ENCODE measurements at regions of chr6 and their contacts with region 1.

Region 1: GRCh38 chr6:100446115-100447080 is 18.3 kb downstream of the SIM1 start:
- DNase-seq: no peak
- ATAC-seq: no peak
- H3K4me3 ChIP-seq: no peak overlapping the region
- H3K4me3 Mint-ChIP-seq: peak overlapping the region in 3 of 10 donors; percentile 9 to 35 (median 28)
- H3K27ac ChIP-seq: no peak overlapping the region
- H3K27ac Mint-ChIP-seq: peak overlapping the region in 1 of 9 donors; percentile 73
- H3K4me1 ChIP-seq: no peaks in the 10 kb centered on the region
- H3K4me1 Mint-ChIP-seq: peaks cover 0 to 11% (median 3%) of the 10 kb centered on the region in 7 donors
- H3K27me3 ChIP-seq: peaks cover 0 to 8% of the 10 kb centered on the region in 2 donors
- H3K27me3 Mint-ChIP-seq: peaks cover 39 to 67% (median 55%) of the 10 kb centered on the region in 5 donors

Region 2: GRCh38 chr6:99603421-99604165 is 842.8 kb before region 1 on chr6:
- CTCF ChIA-PET with region 1: no interaction called
- POLR2A ChIA-PET with region 1: no interaction called
- intact Hi-C with region 1: loop called in 1 of 2 experiments (anchors 5 kb)
- DNase-seq: peak in 1 of 9 donors; percentile 48
- ATAC-seq: peak; percentile 35
- H3K4me3 ChIP-seq: peak overlapping the region; percentile 40
- H3K4me3 Mint-ChIP-seq: peak overlapping the region; percentile 35 to 75 (median 70)
- H3K27ac ChIP-seq: no peak overlapping the region
- H3K27ac Mint-ChIP-seq: no peak overlapping the region
- H3K4me1 ChIP-seq: peaks cover 18 to 28% of the 10 kb centered on the region in 2 donors
- H3K4me1 Mint-ChIP-seq: peaks cover 18 to 44% (median 27%) of the 10 kb centered on the region in 7 donors
- H3K27me3 ChIP-seq: peaks cover 45 to 47% of the 10 kb centered on the region in 2 donors
- H3K27me3 Mint-ChIP-seq: peaks cover 83 to 94% (median 85%) of the 10 kb centered on the region in 5 donors

Region 3: GRCh38 chr6:100464903-100465700 is 18.7 kb after region 1 on chr6 and contains the start of gene SIM1:
- CTCF ChIA-PET with region 1: no interaction called
- POLR2A ChIA-PET with region 1: no interaction called
- intact Hi-C with region 1: loop called in 1 of 2 experiments (anchors 1 kb)
- DNase-seq: no peak
- ATAC-seq: peak; percentile 32
- H3K4me3 ChIP-seq: no peak within 1 kb of the TSS
- H3K4me3 Mint-ChIP-seq: peak within 1 kb of the TSS; percentile 13 to 66 (median 54)
- H3K27ac ChIP-seq: no peak within 1 kb of the TSS
- H3K27ac Mint-ChIP-seq: peak within 1 kb of the TSS in 1 of 9 donors; percentile 78
- H3K4me1 ChIP-seq: peaks cover 6 to 15% of the 10 kb centered on the region in 2 donors
- H3K4me1 Mint-ChIP-seq: peaks cover 7 to 47% (median 24%) of the 10 kb centered on the region in 7 donors
- H3K27me3 ChIP-seq: peaks cover 32 to 67% of the 10 kb centered on the region in 2 donors
- H3K27me3 Mint-ChIP-seq: peaks cover 84 to 93% (median 87%) of the 10 kb centered on the region in 5 donors
- total RNA-seq, gene SIM1: not detected

Region 4: DNA sequence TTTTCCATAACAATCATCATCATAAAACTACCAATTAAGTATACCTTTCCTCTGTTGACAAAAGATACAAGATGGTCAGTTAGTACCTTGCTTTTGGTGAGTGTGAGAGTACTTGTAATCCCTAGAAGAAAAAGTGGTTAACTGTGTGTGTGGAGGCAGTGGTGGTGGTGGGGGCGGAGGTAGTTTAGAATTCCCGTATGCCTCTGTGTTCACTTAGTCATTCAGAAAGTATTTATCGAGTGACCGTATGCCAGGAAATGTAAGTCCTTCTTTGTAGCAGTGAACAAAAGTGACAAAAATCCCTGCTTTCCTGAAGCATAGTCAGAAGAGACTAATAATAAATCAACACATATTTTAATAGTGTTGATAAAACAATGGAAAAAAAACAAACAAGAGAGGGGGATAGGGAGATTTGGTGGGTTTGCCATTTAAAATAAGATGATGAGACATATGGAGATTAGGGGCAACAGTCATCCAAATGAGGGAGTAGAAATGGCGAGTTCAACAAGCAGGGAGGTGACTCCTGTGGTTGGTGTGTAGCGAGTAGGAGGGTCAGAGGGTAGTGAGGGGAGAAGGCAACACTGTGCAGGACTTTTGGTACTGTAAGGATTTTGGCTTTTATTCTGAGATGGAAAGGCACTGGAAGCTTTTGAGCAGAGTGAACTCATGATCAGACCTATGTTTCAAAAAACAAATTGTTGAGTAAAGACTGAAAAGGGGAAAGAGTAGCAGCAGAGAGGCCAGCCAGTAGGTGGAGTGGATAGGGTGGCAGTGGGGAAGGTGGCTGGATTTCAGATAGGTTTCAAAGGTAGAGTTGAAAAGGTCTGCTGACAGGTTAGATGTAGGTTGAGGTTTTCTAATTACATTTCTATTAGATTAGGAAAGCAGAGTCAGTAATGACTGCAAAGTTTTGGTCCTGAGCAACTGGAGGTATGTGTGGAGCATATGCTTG is 58.7 kb after region 1 on chr6:
- CTCF ChIA-PET with region 1: no interaction called
- POLR2A ChIA-PET with region 1: no interaction called
- intact Hi-C with region 1: no loop called
- DNase-seq: no peak
- ATAC-seq: no peak
- H3K4me3 ChIP-seq: no peak overlapping the region
- H3K4me3 Mint-ChIP-seq: no peak overlapping the region
- H3K27ac ChIP-seq: no peak overlapping the region
- H3K27ac Mint-ChIP-seq: no peak overlapping the region
- H3K4me1 ChIP-seq: no peaks in the 10 kb centered on the region
- H3K4me1 Mint-ChIP-seq: no peaks in the 10 kb centered on the region
- H3K27me3 ChIP-seq: no peaks in the 10 kb centered on the region
- H3K27me3 Mint-ChIP-seq: peaks cover 2 to 11% (median 6%) of the 10 kb centered on the region in 5 donors

Region 5: GRCh38 chr6:101401792-101402621 is 955.6 kb after region 1 on chr6:
- CTCF ChIA-PET with region 1: no interaction called
- POLR2A ChIA-PET with region 1: no interaction called
- intact Hi-C with region 1: loop called in 1 of 2 experiments (anchors 5 kb)
- DNase-seq: no peak
- ATAC-seq: no peak
- H3K4me3 ChIP-seq: no peak overlapping the region
- H3K4me3 Mint-ChIP-seq: no peak overlapping the region
- H3K27ac ChIP-seq: no peak overlapping the region
- H3K27ac Mint-ChIP-seq: no peak overlapping the region
- H3K4me1 ChIP-seq: no peaks in the 10 kb centered on the region
- H3K4me1 Mint-ChIP-seq: peaks cover 0 to 4% (median 0%) of the 10 kb centered on the region in 7 donors
- H3K27me3 ChIP-seq: peaks cover 0 to 4% of the 10 kb centered on the region in 2 donors
- H3K27me3 Mint-ChIP-seq: peaks cover 54 to 76% (median 62%) of the 10 kb centered on the region in 5 donors

Measured in naive thymus-derived CD4-positive, alpha-beta T cell (primary cell).